A673 (cell line): ENCODE measurements at regions of chr12 and their contacts with region 1.

Region 1: DNA sequence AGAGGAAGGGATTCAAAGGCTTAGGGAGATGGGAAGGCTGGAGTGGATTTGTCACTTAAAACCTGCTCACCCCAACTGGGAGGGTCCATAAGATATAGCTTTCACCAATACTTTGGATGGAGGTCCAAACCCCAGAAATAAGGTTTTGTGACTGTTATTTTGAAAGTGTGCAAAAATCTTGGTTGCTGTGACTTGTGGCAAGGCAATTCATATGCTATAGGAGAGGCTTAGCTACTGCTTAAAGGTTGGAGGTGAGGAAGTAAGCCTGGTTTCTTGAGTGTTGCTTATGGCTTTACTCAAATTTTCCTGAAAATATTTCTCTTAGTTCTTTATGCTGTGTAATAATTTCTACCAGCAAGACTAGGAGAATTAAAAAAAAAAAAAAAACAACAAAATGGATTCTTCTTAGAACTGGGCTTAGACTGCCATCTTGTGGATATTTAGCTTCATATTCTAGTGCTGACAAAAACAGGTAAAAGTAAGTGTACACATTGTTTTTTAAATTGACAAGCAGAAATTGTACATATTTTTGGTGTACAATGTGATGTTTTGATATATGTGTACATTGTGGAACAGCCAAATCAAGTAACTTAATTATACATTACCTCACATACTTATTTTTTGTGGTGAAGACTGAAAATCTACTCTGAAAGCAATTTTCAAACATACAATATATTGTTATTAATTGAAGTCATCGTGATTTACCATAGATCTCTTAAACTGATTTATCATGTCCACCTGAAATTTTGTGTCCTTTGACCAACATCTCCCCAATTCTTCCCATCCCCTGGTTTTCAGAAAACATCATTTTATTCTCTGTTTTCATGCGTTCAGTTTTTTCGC is 23.0 kb downstream of the PDE6H start:
- DNase-seq: peak; percentile 71
- H3K4me3 ChIP-seq: no peak overlapping the region
- H3K27ac ChIP-seq: no peak overlapping the region
- H3K4me1 ChIP-seq: no peaks in the 10 kb centered on the region
- H3K27me3 ChIP-seq: no peaks in the 10 kb centered on the region
- CTCF ChIP-seq: peak; percentile 73

Region 2: GRCh38 chr12:14629832-14630710 is 365.7 kb before region 1 on chr12:
- CTCF ChIA-PET with region 1: no interaction called
- POLR2A ChIA-PET with region 1: no interaction called
- intact Hi-C with region 1: loop called (anchors 10 kb)
- DNase-seq: peak; percentile 81
- H3K4me3 ChIP-seq: no peak overlapping the region
- H3K27ac ChIP-seq: no peak overlapping the region
- H3K4me1 ChIP-seq: no peaks in the 10 kb centered on the region
- H3K27me3 ChIP-seq: no peaks in the 10 kb centered on the region
- CTCF ChIP-seq: peak; percentile 97

Region 3: GRCh38 chr12:14723763-14724162 is 272.0 kb before region 1 on chr12:
- CTCF ChIA-PET with region 1: interaction called, 6 read pairs
- POLR2A ChIA-PET with region 1: no interaction called
- intact Hi-C with region 1: loop called (anchors 1 kb)
- DNase-seq: peak; percentile 76
- H3K4me3 ChIP-seq: no peak overlapping the region
- H3K27ac ChIP-seq: no peak overlapping the region
- H3K4me1 ChIP-seq: no peaks in the 10 kb centered on the region
- H3K27me3 ChIP-seq: no peaks in the 10 kb centered on the region
- CTCF ChIP-seq: peak; percentile 73

Region 4: DNA sequence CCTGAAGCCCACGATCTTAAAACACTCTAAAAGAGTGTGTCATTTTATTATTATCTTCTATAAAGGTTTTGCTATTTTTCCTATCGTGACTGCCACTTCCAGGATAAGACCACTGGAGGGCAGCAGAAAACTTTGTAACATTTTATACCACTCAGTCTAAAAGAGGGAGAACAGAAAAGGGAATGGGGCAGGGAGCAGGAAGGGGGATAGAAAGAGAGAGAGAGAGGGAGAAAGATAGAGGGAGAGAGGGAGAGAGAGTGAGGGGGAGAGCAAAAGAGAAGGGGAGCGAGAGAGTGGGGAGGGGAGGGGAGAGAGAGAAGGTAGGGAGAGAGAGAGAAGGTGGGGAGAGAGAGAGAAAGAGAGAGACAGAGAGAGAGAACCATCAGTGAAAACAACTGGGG is 150.5 kb before region 1 on chr12:
- CTCF ChIA-PET with region 1: interaction called, 13 read pairs
- POLR2A ChIA-PET with region 1: no interaction called
- intact Hi-C with region 1: loop called (anchors 1 kb)
- DNase-seq: peak; percentile 79
- H3K4me3 ChIP-seq: no peak overlapping the region
- H3K27ac ChIP-seq: no peak overlapping the region
- H3K4me1 ChIP-seq: no peaks in the 10 kb centered on the region
- H3K27me3 ChIP-seq: no peaks in the 10 kb centered on the region
- CTCF ChIP-seq: peak; percentile 84

Region 5: DNA sequence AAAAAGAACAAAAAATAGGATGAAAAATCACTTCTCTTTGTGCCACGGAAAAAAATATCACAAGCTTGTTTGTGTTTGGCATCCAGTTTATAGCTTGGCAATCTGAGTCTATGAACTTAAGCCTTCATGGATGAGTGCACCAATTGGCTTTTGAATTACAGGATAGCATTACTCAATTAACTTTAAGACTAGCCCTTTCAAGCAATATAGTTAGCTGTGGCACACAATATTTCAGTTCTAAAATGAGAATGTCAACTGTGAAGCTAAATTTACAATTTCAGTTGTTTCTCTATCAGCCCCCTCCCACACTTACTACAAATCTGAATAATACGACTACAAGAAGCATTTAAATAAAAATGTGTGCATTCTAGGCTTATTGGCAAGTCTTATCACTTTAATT is 217.1 kb after region 1 on chr12:
- CTCF ChIA-PET with region 1: no interaction called
- POLR2A ChIA-PET with region 1: no interaction called
- intact Hi-C with region 1: no loop called
- DNase-seq: peak; percentile 17
- H3K4me3 ChIP-seq: no peak overlapping the region
- H3K27ac ChIP-seq: no peak overlapping the region
- H3K4me1 ChIP-seq: peaks cover 5% of the 10 kb centered on the region
- H3K27me3 ChIP-seq: no peaks in the 10 kb centered on the region
- CTCF ChIP-seq: no peak